Activated naive CD4-positive, alpha-beta T cell treated with anti-CD3 and anti-CD28 coated beads for 36 hours (primary cell): ENCODE measurements at regions of chr2 and their contacts with region 1.

Region 1: DNA sequence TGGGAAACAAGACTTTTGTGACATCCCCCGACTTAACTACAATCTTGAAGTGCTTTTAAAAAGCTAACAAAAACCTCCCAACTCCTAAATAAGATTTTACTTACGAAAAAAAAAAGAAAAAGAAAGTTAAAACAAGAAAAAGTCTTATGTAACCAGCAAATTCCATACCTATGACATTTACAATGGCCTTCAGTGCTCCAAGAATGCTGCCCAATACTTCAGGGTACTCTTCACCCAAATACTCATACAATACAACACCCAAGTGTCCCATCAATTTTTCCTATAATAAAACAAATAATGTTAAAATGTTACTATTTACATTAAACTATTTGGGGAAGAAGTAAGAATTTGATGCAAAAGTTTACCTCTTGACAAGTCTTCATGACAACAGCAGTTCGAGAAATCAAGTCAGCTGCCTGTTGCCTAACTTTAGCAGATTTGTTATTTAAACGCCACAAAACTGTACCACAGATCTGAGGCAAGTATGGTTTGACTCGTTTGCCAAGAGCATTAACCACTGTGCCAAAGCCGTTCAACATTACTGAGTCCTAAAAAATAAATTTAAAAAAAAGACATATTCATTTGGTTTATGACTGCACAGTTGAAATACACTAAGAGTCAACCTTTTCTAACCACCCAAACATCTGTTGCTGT is 34.8 kb downstream of the SF3B1 start:
- DNase-seq: no peak
- H3K4me3 Mint-ChIP-seq: no peak overlapping the region
- H3K27ac Mint-ChIP-seq: no peak overlapping the region
- H3K4me1 Mint-ChIP-seq: no peaks in the 10 kb centered on the region
- H3K27me3 Mint-ChIP-seq: no peaks in the 10 kb centered on the region

Region 2: DNA sequence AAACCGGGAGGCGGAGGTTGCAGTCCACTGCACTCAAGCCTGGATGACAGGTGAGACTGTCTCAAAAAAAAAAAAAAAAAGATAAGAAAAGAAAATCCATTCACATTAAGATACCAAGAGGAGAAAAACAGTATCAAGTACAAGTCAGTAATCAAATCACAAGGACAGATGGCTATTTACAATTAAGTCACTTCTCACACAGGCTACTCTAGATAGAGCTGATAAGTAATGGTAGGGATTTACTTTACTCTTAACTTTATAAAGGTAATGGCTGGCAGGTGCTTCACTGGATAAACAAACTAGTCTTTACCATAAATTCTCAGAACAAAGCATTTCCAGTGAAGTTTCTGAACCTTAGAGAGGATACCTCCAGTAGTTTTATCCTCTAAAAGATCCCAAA is 23.3 kb after region 1 on chr2:
- CTCF ChIA-PET with region 1: interaction called, 3 read pairs
- intact Hi-C with region 1: loop called (anchors 2 kb)
- DNase-seq: no peak
- H3K4me3 Mint-ChIP-seq: no peak overlapping the region
- H3K27ac Mint-ChIP-seq: no peak overlapping the region
- H3K4me1 Mint-ChIP-seq: peaks cover 52% of the 10 kb centered on the region
- H3K27me3 Mint-ChIP-seq: no peaks in the 10 kb centered on the region

Region 3: DNA sequence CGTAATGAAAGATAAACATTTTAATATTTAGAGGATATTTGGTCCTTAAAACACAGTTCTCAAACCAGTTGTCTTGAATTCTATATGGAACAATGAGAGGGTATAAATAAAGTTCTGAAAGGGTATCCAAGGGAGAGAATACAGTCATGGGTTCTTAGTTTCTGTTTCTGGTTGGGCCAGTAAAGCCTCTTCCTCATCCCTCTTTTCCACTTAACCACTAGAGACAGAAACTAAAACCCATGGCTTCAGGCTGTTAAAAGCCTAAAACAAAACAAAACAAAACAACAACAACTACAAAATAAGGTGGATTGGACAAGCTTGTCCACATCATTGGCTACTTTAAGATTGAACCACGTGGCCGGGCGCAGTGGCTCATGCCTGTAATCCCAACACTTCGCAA is 72.2 kb after region 1 on chr2:
- CTCF ChIA-PET with region 1: interaction called, 3 read pairs
- intact Hi-C with region 1: loop called (anchors 5 kb)
- DNase-seq: no peak
- H3K4me3 Mint-ChIP-seq: no peak overlapping the region
- H3K27ac Mint-ChIP-seq: no peak overlapping the region
- H3K4me1 Mint-ChIP-seq: no peaks in the 10 kb centered on the region
- H3K27me3 Mint-ChIP-seq: no peaks in the 10 kb centered on the region

Region 4: DNA sequence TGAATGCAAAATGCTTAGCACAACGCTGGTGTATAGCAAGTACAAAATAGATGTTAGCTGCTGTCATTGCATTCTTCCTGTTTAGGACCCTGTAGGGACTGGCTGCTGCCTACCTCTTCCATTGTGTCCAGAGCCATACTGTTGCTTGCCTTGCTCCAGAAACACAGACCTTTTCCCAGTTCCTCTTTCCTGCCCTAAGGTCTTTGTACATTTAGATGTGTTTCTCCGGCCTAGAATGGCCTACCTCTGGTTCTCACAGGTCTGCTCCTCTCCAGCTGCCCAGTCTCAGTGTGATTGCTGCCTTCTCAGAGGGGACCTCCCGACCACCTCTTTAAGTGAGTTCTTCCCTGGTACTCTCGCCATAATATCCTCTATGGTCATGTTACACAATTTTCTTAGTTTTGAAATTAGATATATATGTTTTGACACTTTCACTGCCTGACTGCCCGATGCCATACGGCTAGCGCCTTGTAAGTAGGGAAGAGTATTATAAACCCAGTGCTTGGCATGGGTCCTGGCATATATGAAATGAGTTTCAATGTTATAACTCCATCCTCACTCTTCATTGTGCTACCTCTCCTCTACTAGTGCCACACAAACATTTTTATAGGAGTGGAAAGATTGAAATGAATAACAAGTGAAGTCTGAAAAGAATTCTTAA is 227.1 kb after region 1 on chr2:
- CTCF ChIA-PET with region 1: no interaction called
- intact Hi-C with region 1: no loop called
- DNase-seq: no peak
- H3K4me3 Mint-ChIP-seq: no peak overlapping the region
- H3K27ac Mint-ChIP-seq: no peak overlapping the region
- H3K4me1 Mint-ChIP-seq: no peaks in the 10 kb centered on the region
- H3K27me3 Mint-ChIP-seq: no peaks in the 10 kb centered on the region